ENCODE measurements at regions of chr13 and their contacts with region 1.

Region 1: GRCh38 chr13:77184455-77184854 is 142.4 kb downstream of the MYCBP2 start:
- DNase-seq: peak; percentile 76
- H3K4me3 Mint-ChIP-seq: no peak overlapping the region
- H3K27ac Mint-ChIP-seq: peak overlapping the region; percentile 20
- H3K4me1 Mint-ChIP-seq: peaks cover 16% of the 10 kb centered on the region
- H3K27me3 Mint-ChIP-seq: no peaks in the 10 kb centered on the region

Region 2: DNA sequence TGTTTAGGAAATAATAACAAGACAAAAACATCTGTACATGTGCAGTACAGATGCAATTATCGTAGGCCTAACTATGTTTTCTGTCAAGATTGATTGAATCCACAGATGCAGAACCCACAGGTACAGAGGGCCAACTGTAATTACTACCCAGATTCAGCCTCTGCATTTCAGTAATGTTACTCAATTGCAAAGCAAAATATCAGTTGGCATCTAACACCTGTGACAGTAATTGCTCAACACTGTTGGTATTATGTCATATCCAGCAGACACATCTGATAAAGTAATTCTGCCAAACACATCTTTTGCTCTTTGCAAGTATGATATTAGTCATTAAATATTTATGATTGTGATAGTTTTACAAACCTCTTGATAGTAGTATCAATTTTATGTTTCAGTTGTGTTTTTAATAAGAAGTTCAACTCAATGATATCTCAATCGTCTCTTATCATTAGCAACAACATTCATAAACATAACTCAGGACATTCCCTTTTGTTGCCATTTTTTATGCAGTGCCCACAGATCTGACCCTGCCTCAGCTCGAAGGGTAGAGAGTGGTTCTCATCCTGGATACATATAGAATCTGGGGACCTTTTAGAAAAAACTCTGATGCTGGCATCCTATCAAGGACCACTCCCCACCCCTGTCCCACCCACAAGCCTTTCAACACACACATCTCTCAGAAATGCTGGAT is 37.7 kb after region 1 on chr13:
- CTCF ChIA-PET with region 1: no interaction called
- intact Hi-C with region 1: loop called (anchors 1 kb)
- DNase-seq: no peak
- H3K4me3 Mint-ChIP-seq: no peak overlapping the region
- H3K27ac Mint-ChIP-seq: no peak overlapping the region
- H3K4me1 Mint-ChIP-seq: peaks cover 26% of the 10 kb centered on the region
- H3K27me3 Mint-ChIP-seq: no peaks in the 10 kb centered on the region

Region 3: GRCh38 chr13:77492982-77493381 is 308.5 kb after region 1 on chr13:
- CTCF ChIA-PET with region 1: no interaction called
- intact Hi-C with region 1: no loop called
- DNase-seq: peak; percentile 25
- H3K4me3 Mint-ChIP-seq: no peak overlapping the region
- H3K27ac Mint-ChIP-seq: no peak overlapping the region
- H3K4me1 Mint-ChIP-seq: no peaks in the 10 kb centered on the region
- H3K27me3 Mint-ChIP-seq: peaks cover 2% of the 10 kb centered on the region